Heart right ventricle (tissue), 16 donors: ENCODE measurements at regions of chr1 and their contacts with region 1.

Region 1: GRCh38 chr1:167819849-167820683 is 93.9 kb downstream of the ADCY10 start:
- DNase-seq: peak; percentile 75 to 82
- ATAC-seq: peak; percentile 95 to 99 (median 98)
- H3K4me3 ChIP-seq: peak overlapping the region in 9 of 10 donors; percentile 12 to 48 (median 46)
- H3K27ac ChIP-seq: peak overlapping the region in 9 of 10 donors; percentile 61 to 85 (median 79)
- H3K4me1 ChIP-seq: peaks cover 0 to 14% (median 10%) of the 10 kb centered on the region in 9 donors
- H3K27me3 ChIP-seq: no peaks in the 10 kb centered on the region
- CTCF ChIP-seq: peak in 1 of 9 donors; percentile 8

Region 2: GRCh38 chr1:167584581-167584980 is 235.5 kb before region 1 on chr1:
- intact Hi-C with region 1: loop called in 1 of 10 experiments (anchors 10 kb)
- DNase-seq: no peak
- ATAC-seq: no peak
- H3K4me3 ChIP-seq: no peak overlapping the region
- H3K27ac ChIP-seq: no peak overlapping the region
- H3K4me1 ChIP-seq: peaks cover 0 to 6% (median 0%) of the 10 kb centered on the region in 9 donors
- H3K27me3 ChIP-seq: no peaks in the 10 kb centered on the region
- CTCF ChIP-seq: no peak

Region 3: DNA sequence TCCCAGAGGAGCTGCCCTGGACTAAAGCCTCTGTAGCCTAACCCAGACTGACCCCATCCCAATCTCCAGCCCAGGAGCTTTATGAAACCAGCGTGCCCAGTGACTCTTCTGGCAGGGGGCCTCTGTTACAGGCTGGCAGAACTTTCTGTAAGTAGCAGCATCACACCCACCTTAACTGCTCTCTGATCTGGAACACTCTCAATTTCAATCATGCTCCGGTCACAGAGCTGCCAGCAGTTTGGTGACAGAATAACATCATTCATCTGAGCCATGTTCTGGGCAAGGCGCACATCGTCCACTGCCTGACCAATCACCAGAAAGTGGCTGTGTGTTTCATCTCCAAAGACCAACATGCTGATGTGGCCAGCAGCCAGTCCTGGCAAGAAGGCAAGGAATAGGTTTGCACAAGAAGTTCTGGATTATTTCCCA is 79.2 kb after region 1 on chr1:
- intact Hi-C with region 1: no loop called
- DNase-seq: peak; percentile 17 to 31
- ATAC-seq: peak in 7 of 8 donors; percentile 47 to 94 (median 59)
- H3K4me3 ChIP-seq: no peak overlapping the region
- H3K27ac ChIP-seq: peak overlapping the region in 1 of 10 donors; percentile 16
- H3K4me1 ChIP-seq: peaks cover 0 to 11% (median 0%) of the 10 kb centered on the region in 9 donors
- H3K27me3 ChIP-seq: no peaks in the 10 kb centered on the region
- CTCF ChIP-seq: no peak

Region 4: GRCh38 chr1:167922023-167922422 is 102.0 kb after region 1 on chr1:
- intact Hi-C with region 1: loop called in 1 of 10 experiments (anchors 10 kb)
- DNase-seq: no peak
- ATAC-seq: peak in 6 of 8 donors; percentile 44 to 91 (median 77)
- H3K4me3 ChIP-seq: peak overlapping the region in 1 of 10 donors; percentile 6
- H3K27ac ChIP-seq: peak overlapping the region in 6 of 10 donors; percentile 25 to 72 (median 58)
- H3K4me1 ChIP-seq: peaks cover 0 to 49% (median 16%) of the 10 kb centered on the region in 9 donors
- H3K27me3 ChIP-seq: no peaks in the 10 kb centered on the region
- CTCF ChIP-seq: no peak